ENCODE measurements at regions of chr3 and their contacts with region 1.

Region 1: DNA sequence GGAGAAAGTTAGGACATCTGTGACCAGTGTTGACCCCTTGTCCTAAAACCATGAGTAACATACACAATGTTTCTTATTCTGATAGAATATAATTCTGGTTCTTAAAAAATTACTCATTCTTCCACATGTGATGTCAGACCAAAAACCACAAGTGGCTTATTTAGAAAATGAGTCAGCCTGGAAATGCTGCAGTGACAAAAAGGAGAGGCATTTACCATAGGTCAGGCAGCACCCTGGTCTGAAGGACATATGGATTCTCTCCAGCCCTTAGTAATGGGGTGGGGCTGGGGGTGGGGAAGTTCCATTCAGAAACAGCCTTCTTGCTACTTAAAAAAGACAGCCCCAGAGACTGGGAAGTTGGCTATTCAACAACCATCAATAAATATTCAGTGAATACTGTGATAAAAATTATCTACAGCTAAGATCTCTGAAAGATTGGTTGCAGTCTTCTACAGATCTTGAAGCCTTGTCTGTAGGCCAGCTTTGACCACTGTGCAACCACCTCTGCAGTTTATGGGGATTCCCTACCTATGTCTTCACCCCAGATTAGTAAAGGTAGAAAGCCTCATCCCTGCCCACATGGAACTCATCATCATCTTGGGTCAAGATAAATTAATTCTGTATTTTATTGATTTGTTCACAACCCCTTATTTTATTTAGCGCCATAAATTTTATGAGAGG is 34.9 kb upstream of the TIMP4 start:
- DNase-seq: peak; percentile 79
- H3K4me3 Mint-ChIP-seq: peak overlapping the region; percentile 65
- H3K27ac Mint-ChIP-seq: peak overlapping the region; percentile 93
- H3K4me1 Mint-ChIP-seq: peaks cover 77% of the 10 kb centered on the region
- H3K27me3 Mint-ChIP-seq: no peaks in the 10 kb centered on the region

Region 2: GRCh38 chr3:12135029-12135657 is 58.5 kb before region 1 on chr3:
- intact Hi-C with region 1: loop called (anchors 5 kb)
- DNase-seq: peak; percentile 88
- H3K4me3 Mint-ChIP-seq: no peak overlapping the region
- H3K27ac Mint-ChIP-seq: no peak overlapping the region
- H3K4me1 Mint-ChIP-seq: peaks cover 4% of the 10 kb centered on the region
- H3K27me3 Mint-ChIP-seq: peaks cover 21% of the 10 kb centered on the region

Region 3: GRCh38 chr3:12232785-12233300 is 39.2 kb after region 1 on chr3:
- intact Hi-C with region 1: loop called (anchors 2 kb)
- DNase-seq: no peak
- H3K4me3 Mint-ChIP-seq: no peak overlapping the region
- H3K27ac Mint-ChIP-seq: peak overlapping the region; percentile 75
- H3K4me1 Mint-ChIP-seq: peaks cover 5% of the 10 kb centered on the region
- H3K27me3 Mint-ChIP-seq: peaks cover 20% of the 10 kb centered on the region

Region 4: DNA sequence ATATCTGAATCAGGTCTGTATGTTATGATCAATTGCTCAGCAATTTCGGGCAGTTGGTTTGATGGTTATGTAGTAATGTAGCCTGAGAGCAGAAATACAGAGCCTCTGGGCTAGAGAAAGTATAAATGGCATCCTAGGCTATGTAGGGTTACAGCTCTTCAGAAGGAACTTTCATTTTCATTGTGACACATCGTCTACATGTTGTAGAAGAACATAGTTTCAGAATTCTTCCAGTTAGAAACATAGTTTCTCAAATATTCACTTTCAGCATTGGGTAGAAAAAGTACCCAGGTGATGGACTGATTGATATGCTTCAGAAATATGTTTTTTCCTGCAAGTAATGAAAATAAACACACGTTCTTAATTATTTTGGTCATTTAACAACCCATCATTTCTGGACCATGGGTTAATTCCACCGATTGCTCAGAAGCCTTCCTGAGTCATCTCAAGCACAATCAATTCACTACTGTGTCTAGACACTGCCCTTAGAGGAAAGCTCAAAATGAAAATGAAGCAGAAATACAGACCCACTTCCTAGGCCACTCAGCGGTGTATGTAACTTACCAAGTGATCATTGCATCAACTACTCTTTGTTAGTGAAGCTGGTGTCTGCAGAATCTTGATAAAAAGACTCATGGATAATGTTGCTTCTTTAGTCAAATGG is 201.9 kb after region 1 on chr3:
- intact Hi-C with region 1: loop called (anchors 1 kb)
- DNase-seq: peak; percentile 67
- H3K4me3 Mint-ChIP-seq: peak overlapping the region; percentile 45
- H3K27ac Mint-ChIP-seq: peak overlapping the region; percentile 73
- H3K4me1 Mint-ChIP-seq: peaks cover 9% of the 10 kb centered on the region
- H3K27me3 Mint-ChIP-seq: peaks cover 11% of the 10 kb centered on the region